Motor neuron (in vitro differentiated cells): ENCODE measurements at regions of chr7 and their contacts with region 1.

Region 1: GRCh38 chr7:99928994-99929729 is at the start of gene GJC3:
- ATAC-seq: peak; percentile 91 to 99 (median 97)
- H3K4me3 ChIP-seq: peak within 1 kb of the TSS in 2 of 5 donors; percentile 3 to 10
- H3K27ac ChIP-seq: no peak within 1 kb of the TSS
- H3K4me1 ChIP-seq: no peaks in the 10 kb centered on the region
- total RNA-seq, gene GJC3: 0.18 to 3.7 (median 0.46) TPM in 6 of 8 experiments, not detected in the others

Region 2: GRCh38 chr7:99997545-99998137 is 68.5 kb after region 1 on chr7:
- in situ Hi-C with region 1: loop called in 1 of 9 experiments (anchors 10 kb)
- ATAC-seq: peak in 7 of 8 experiments; percentile 36 to 88 (median 65)
- H3K4me3 ChIP-seq: peak overlapping the region in 4 of 5 donors; percentile 24 to 37 (median 24)
- H3K27ac ChIP-seq: peak overlapping the region; percentile 48 to 71
- H3K4me1 ChIP-seq: peaks cover 0 to 8% of the 10 kb centered on the region in 2 donors

Region 3: DNA sequence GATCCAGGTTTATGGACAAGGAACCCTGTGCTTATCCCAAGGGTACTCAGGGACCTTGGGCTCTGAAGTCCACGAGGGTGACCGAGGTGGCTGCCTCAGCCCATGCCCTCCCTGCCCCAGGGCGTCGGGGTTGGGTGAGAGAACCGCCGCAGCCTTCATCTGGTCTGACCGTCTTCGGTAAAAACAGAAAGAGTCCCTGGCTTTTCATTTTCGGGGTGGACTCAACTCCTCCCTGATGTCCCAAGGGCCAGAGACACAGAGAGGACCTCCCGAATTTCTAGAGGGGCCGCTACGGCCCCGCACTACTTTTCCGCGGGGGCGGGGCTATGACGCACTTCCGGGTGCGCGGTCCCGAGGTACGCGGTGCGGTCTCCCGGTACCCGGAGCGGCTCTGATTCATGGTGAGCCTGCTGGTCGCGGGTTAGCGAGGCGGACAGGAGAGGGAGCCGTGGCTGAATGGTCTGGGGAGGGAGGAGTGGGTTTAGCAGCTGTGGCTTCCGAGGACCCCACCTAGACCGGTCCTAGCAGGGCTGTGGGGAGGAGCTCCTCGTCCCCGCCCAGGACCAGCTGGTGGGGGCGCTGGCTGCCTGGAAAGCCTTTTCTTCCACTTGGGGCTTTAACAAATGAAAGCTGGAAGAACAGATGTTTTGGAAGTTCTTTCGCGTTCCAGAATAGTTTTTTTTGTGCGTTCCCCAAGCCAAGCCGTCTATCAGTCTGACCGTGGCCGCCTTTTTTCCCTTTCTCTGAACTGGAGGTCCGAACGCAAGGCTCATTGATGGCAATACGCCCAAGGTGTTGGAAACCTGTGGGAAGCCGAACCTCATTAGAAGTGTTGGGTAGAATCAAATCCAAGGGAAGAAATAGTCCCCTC is 120.5 kb after region 1 on chr7 and contains the start of gene ZSCAN21:
- in situ Hi-C with region 1: loop called in 1 of 9 experiments (anchors 25 kb)
- ATAC-seq: peak; percentile 84 to 99 (median 98)
- H3K4me3 ChIP-seq: peak within 1 kb of the TSS; percentile 47 to 79 (median 68)
- H3K27ac ChIP-seq: peak within 1 kb of the TSS; percentile 82 to 89
- H3K4me1 ChIP-seq: peaks cover 10 to 12% of the 10 kb centered on the region in 2 donors
- total RNA-seq, gene ZSCAN21: 5.9 to 19.5 (median 16.1) TPM